PC-3 (cell line): ENCODE measurements at regions of chr14 and their contacts with region 1.

Region 1: GRCh38 chr14:22319526-22320361 is 269.3 kb downstream of the DAD1 start:
- DNase-seq: peak; percentile 89
- ATAC-seq: peak; percentile 78
- H3K4me3 ChIP-seq: no peak overlapping the region
- H3K27ac ChIP-seq: no peak overlapping the region
- H3K4me1 ChIP-seq: peaks cover 24% of the 10 kb centered on the region
- H3K27me3 ChIP-seq: no peaks in the 10 kb centered on the region
- CTCF ChIP-seq: peak; percentile 81

Region 2: GRCh38 chr14:22232486-22232885 is 87.3 kb before region 1 on chr14:
- CTCF ChIA-PET with region 1: no interaction called
- POLR2A ChIA-PET with region 1: no interaction called
- intact Hi-C with region 1: no loop called
- DNase-seq: no peak
- ATAC-seq: no peak
- H3K4me3 ChIP-seq: no peak overlapping the region
- H3K27ac ChIP-seq: no peak overlapping the region
- H3K4me1 ChIP-seq: no peaks in the 10 kb centered on the region
- H3K27me3 ChIP-seq: no peaks in the 10 kb centered on the region
- CTCF ChIP-seq: no peak

Region 3: GRCh38 chr14:22303589-22304195 is 16.1 kb before region 1 on chr14:
- CTCF ChIA-PET with region 1: interaction called, 6 read pairs
- POLR2A ChIA-PET with region 1: no interaction called
- intact Hi-C with region 1: loop called (anchors 1 kb)
- DNase-seq: peak; percentile 63
- ATAC-seq: peak; percentile 35
- H3K4me3 ChIP-seq: no peak overlapping the region
- H3K27ac ChIP-seq: no peak overlapping the region
- H3K4me1 ChIP-seq: peaks cover under 1% of the 10 kb centered on the region; the same call in 1 of the 2 replicates
- H3K27me3 ChIP-seq: no peaks in the 10 kb centered on the region
- CTCF ChIP-seq: peak; percentile 65; the same call in 1 of the 2 replicates

Region 4: GRCh38 chr14:22358726-22359125 is 39.0 kb after region 1 on chr14:
- CTCF ChIA-PET with region 1: no interaction called
- POLR2A ChIA-PET with region 1: no interaction called
- intact Hi-C with region 1: no loop called
- DNase-seq: no peak
- ATAC-seq: no peak
- H3K4me3 ChIP-seq: no peak overlapping the region
- H3K27ac ChIP-seq: no peak overlapping the region
- H3K4me1 ChIP-seq: no peaks in the 10 kb centered on the region
- H3K27me3 ChIP-seq: no peaks in the 10 kb centered on the region
- CTCF ChIP-seq: no peak

Region 5: DNA sequence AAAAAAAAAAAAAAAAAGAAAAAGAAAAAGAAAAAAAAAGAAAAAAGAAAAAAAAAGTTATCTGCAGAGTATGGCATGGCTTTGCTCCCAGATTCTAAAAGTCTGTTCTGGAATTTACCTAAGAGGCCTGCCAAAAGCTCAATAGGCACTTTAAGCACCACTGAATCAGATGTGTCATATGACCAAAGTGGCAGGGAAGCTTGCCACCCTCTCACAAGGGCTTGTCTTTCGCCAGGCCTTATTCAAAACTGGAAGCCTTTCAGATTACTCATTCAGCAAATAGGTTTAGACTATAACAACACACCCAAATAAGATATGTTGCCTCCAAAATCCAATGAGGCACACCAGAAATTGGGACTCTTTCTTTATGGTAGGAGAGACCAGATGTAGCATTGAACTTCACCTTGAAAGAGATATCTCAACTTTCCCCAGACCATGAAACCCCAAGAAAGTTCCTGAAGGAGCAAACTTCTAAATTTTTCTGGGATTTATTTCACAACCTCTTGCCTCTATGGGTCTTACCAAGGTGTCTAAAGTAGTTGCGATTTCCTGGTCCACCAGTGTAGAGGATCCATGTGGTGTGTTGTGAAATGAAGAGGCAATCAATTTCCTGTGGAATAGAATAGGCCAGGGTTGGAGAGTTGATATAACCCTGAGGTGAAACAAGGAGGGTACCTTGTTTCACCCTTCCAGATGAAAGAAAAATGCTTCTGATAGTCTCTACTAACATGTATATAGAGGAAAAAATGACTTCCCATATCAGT is 50.5 kb after region 1 on chr14:
- CTCF ChIA-PET with region 1: interaction called, 59 read pairs
- POLR2A ChIA-PET with region 1: interaction called, 40 read pairs
- intact Hi-C with region 1: loop called (anchors 1 kb)
- DNase-seq: peak; percentile 97
- ATAC-seq: peak; percentile 94
- H3K4me3 ChIP-seq: no peak overlapping the region
- H3K27ac ChIP-seq: peak overlapping the region; percentile 50
- H3K4me1 ChIP-seq: peaks cover 21% of the 10 kb centered on the region
- H3K27me3 ChIP-seq: no peaks in the 10 kb centered on the region
- CTCF ChIP-seq: no peak

Region 6: GRCh38 chr14:22380571-22381407 is 61.0 kb after region 1 on chr14:
- CTCF ChIA-PET with region 1: interaction called, 59 read pairs
- POLR2A ChIA-PET with region 1: no interaction called
- intact Hi-C with region 1: loop called (anchors 1 kb)
- DNase-seq: peak; percentile 72
- ATAC-seq: peak; percentile 96
- H3K4me3 ChIP-seq: peak overlapping the region; percentile 49; the same call in 1 of the 2 replicates
- H3K27ac ChIP-seq: peak overlapping the region; percentile 23; the same call in 1 of the 2 replicates
- H3K4me1 ChIP-seq: peaks cover 25% of the 10 kb centered on the region
- H3K27me3 ChIP-seq: no peaks in the 10 kb centered on the region
- CTCF ChIP-seq: no peak